ENCODE measurements at regions of chr2 and their contacts with region 1.

Region 1: GRCh38 chr2:161308178-161308955 is at the start of gene PSMD14:
- DNase-seq: peak; percentile 97
- H3K4me3 Mint-ChIP-seq: peak within 1 kb of the TSS; percentile 99
- H3K27ac Mint-ChIP-seq: peak within 1 kb of the TSS; percentile 97
- H3K4me1 Mint-ChIP-seq: peaks cover 33% of the 10 kb centered on the region
- H3K27me3 Mint-ChIP-seq: peaks cover 11% of the 10 kb centered on the region
- total RNA-seq, gene PSMD14: 111 and 113 TPM in 2 replicates

Region 2: DNA sequence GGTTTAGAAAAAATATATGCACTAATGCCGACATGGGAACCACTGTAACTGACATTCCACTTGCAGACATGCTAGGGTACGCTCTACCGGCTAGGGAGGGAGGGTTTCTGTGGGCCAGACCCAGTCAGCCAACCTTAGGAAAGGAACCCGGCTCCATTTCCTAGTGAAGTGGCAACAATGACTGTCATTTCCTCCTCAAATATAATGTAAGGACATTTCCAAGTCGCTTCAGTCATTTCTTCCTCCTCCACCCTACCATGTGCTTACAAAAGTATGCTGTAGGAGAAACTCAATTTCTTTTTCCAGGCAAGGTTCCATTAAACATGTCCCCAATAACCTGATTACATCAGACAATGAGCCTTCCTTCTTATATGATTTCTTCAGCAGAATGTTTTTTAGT is 64.5 kb before region 1 on chr2:
- intact Hi-C with region 1: loop called (anchors 1 kb)
- DNase-seq: peak; percentile 70
- H3K4me3 Mint-ChIP-seq: peak overlapping the region; percentile 94
- H3K27ac Mint-ChIP-seq: peak overlapping the region; percentile 97
- H3K4me1 Mint-ChIP-seq: peaks cover 43% of the 10 kb centered on the region
- H3K27me3 Mint-ChIP-seq: no peaks in the 10 kb centered on the region

Region 3: GRCh38 chr2:161384864-161385263 is 76.5 kb after region 1 on chr2:
- intact Hi-C with region 1: loop called (anchors 2 kb)
- DNase-seq: peak; percentile 83
- H3K4me3 Mint-ChIP-seq: peak overlapping the region; percentile 25
- H3K27ac Mint-ChIP-seq: no peak overlapping the region
- H3K4me1 Mint-ChIP-seq: peaks cover 16% of the 10 kb centered on the region
- H3K27me3 Mint-ChIP-seq: no peaks in the 10 kb centered on the region

Region 4: GRCh38 chr2:161414042-161415033 is 106.0 kb after region 1 on chr2:
- intact Hi-C with region 1: loop called (anchors 5 kb)
- DNase-seq: peak; percentile 68
- H3K4me3 Mint-ChIP-seq: peak overlapping the region; percentile 75
- H3K27ac Mint-ChIP-seq: no peak overlapping the region
- H3K4me1 Mint-ChIP-seq: peaks cover 44% of the 10 kb centered on the region
- H3K27me3 Mint-ChIP-seq: peaks cover 54% of the 10 kb centered on the region

Region 5: GRCh38 chr2:161709428-161709827 is 401.1 kb after region 1 on chr2:
- intact Hi-C with region 1: no loop called
- DNase-seq: no peak
- H3K4me3 Mint-ChIP-seq: peak overlapping the region; percentile 55
- H3K27ac Mint-ChIP-seq: no peak overlapping the region
- H3K4me1 Mint-ChIP-seq: peaks cover 2% of the 10 kb centered on the region
- H3K27me3 Mint-ChIP-seq: peaks cover 25% of the 10 kb centered on the region

Region 6: GRCh38 chr2:162318328-162319180 is 1010.2 kb after region 1 on chr2 and contains the start of gene IFIH1:
- intact Hi-C with region 1: loop called (anchors 2 kb)
- DNase-seq: peak; percentile 95
- H3K4me3 Mint-ChIP-seq: peak within 1 kb of the TSS; percentile 87
- H3K27ac Mint-ChIP-seq: peak within 1 kb of the TSS; percentile 93
- H3K4me1 Mint-ChIP-seq: peaks cover 54% of the 10 kb centered on the region
- H3K27me3 Mint-ChIP-seq: no peaks in the 10 kb centered on the region
- total RNA-seq, gene IFIH1: 22.5 and 26.3 TPM in 2 replicates